ENCODE measurements at regions of chr16 and their contacts with region 1.

Region 1: GRCh38 chr16:15949210-15950160 is at the start of gene ABCC1:
- DNase-seq: peak; percentile 8 to 81 (median 45)
- ATAC-seq: peak; percentile 75 to 88 (median 87)
- H3K4me3 ChIP-seq: peak within 1 kb of the TSS; percentile 76 to 87
- H3K4me3 Mint-ChIP-seq: peak within 1 kb of the TSS; percentile 90 to 97 (median 90)
- H3K27ac ChIP-seq: peak within 1 kb of the TSS; percentile 86
- H3K27ac Mint-ChIP-seq: peak within 1 kb of the TSS; percentile 94 to 95
- H3K4me1 ChIP-seq: peaks cover 12 to 43% of the 10 kb centered on the region in 2 experiments
- H3K4me1 Mint-ChIP-seq: peaks cover 40 to 46% (median 43%) of the 10 kb centered on the region in 3 donors
- H3K27me3 ChIP-seq: no peaks in the 10 kb centered on the region
- H3K27me3 Mint-ChIP-seq: no peaks in the 10 kb centered on the region
- total RNA-seq, gene ABCC1: 59.4 to 68.1 (median 63.0) TPM

Region 2: GRCh38 chr16:15765880-15766279 is 183.6 kb before region 1 on chr16:
- CTCF ChIA-PET with region 1: no interaction called
- POLR2A ChIA-PET with region 1: no interaction called
- DNase-seq: peak in 17 of 35 experiments; percentile 1 to 59 (median 12)
- ATAC-seq: peak; percentile 32 to 67 (median 59)
- H3K4me3 ChIP-seq: no peak overlapping the region
- H3K4me3 Mint-ChIP-seq: no peak overlapping the region
- H3K27ac ChIP-seq: no peak overlapping the region
- H3K27ac Mint-ChIP-seq: no peak overlapping the region
- H3K4me1 ChIP-seq: no peaks in the 10 kb centered on the region
- H3K4me1 Mint-ChIP-seq: no peaks in the 10 kb centered on the region
- H3K27me3 ChIP-seq: peaks cover 0 to 11% of the 10 kb centered on the region in 2 experiments
- H3K27me3 Mint-ChIP-seq: peaks cover 12 to 18% of the 10 kb centered on the region in 2 donors

Region 3: DNA sequence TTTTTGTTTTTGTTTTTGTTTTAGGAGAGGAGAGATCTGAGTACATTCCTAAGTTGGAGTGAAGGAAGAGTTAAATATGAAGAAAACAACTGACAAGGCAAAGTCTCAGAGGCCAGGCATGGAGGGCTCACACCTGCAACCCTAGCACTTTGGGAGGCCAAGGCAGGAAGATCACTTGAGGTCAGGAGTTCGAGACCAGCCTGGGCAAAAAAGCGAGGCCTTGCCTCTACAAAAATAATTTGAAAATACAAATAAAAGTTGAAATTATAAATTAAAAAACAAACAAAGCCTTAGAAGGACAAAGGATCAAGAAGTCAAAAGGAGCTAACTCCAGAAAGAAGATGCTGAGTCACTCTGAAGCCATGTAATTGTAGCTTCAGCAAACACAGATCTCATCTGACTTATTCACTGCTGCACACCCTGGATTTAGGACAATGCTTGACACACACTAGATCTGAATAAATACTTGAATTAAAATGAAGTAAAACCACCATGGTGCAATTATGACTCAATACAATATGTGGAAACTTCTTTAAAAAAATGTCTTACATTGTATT is 70.2 kb before region 1 on chr16:
- CTCF ChIA-PET with region 1: no interaction called
- POLR2A ChIA-PET with region 1: no interaction called
- DNase-seq: no peak
- ATAC-seq: no peak
- H3K4me3 ChIP-seq: no peak overlapping the region
- H3K4me3 Mint-ChIP-seq: no peak overlapping the region
- H3K27ac ChIP-seq: no peak overlapping the region
- H3K27ac Mint-ChIP-seq: peak overlapping the region; percentile 31 to 87
- H3K4me1 ChIP-seq: peaks cover 0 to 2% of the 10 kb centered on the region in 2 experiments
- H3K4me1 Mint-ChIP-seq: peaks cover 5 to 10% (median 5%) of the 10 kb centered on the region in 3 donors
- H3K27me3 ChIP-seq: no peaks in the 10 kb centered on the region
- H3K27me3 Mint-ChIP-seq: no peaks in the 10 kb centered on the region

Region 4: DNA sequence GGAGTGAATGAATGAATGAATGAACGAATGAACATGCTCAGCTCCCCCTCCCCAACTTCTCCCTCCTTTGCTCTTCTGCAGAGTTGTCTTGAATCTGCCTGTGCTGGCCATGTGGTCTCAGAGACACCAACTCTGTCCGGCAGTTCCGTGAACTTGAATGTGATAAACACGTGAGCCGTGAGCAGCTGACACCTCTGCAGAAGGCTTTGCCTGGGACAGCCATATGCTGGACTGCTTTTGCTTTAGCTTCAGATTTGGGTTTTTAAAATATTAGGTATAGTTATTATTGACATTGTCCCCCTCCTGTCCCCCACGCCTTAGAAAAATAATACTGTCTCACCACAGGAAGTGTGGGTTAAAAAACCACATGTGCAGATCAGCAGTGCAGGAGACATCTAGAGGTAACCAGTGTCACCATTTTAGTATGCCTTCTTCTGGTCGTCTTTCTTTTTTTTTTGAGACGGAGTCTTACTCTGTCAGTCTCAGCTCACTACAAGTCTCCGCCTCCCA is 83.8 kb after region 1 on chr16:
- CTCF ChIA-PET with region 1: no interaction called
- POLR2A ChIA-PET with region 1: interaction called in 1 of 2 experiments, 11 read pairs
- DNase-seq: peak in 21 of 35 experiments; percentile 3 to 70 (median 9)
- ATAC-seq: peak; percentile 70 to 89 (median 84)
- H3K4me3 ChIP-seq: no peak overlapping the region
- H3K4me3 Mint-ChIP-seq: peak overlapping the region in 1 of 3 donors; percentile 49
- H3K27ac ChIP-seq: peak overlapping the region; percentile 55
- H3K27ac Mint-ChIP-seq: peak overlapping the region; percentile 55 to 88
- H3K4me1 ChIP-seq: peaks cover 0 to 19% of the 10 kb centered on the region in 2 experiments
- H3K4me1 Mint-ChIP-seq: peaks cover 19 to 27% (median 21%) of the 10 kb centered on the region in 3 donors
- H3K27me3 ChIP-seq: no peaks in the 10 kb centered on the region
- H3K27me3 Mint-ChIP-seq: no peaks in the 10 kb centered on the region

Region 5: GRCh38 chr16:16067127-16067526 is 117.6 kb after region 1 on chr16:
- CTCF ChIA-PET with region 1: no interaction called
- POLR2A ChIA-PET with region 1: no interaction called
- DNase-seq: no peak
- ATAC-seq: no peak
- H3K4me3 ChIP-seq: no peak overlapping the region
- H3K4me3 Mint-ChIP-seq: no peak overlapping the region
- H3K27ac ChIP-seq: no peak overlapping the region
- H3K27ac Mint-ChIP-seq: no peak overlapping the region
- H3K4me1 ChIP-seq: peaks cover under 1 to 4% of the 10 kb centered on the region in 2 experiments
- H3K4me1 Mint-ChIP-seq: peaks cover 3 to 11% (median 7%) of the 10 kb centered on the region in 3 donors
- H3K27me3 ChIP-seq: no peaks in the 10 kb centered on the region
- H3K27me3 Mint-ChIP-seq: no peaks in the 10 kb centered on the region

Measured in T-cell (primary cell).